PC-9 (cell line): ENCODE measurements at regions of chrX and their contacts with region 1.

Region 1: GRCh38 chrX:23704673-23705206 is 37.4 kb downstream of the PRDX4 start:
- DNase-seq: no peak
- H3K4me3 ChIP-seq: no peak overlapping the region
- H3K27ac ChIP-seq: no peak overlapping the region
- H3K4me1 ChIP-seq: no peaks in the 10 kb centered on the region
- H3K27me3 ChIP-seq: no peaks in the 10 kb centered on the region
- CTCF ChIP-seq: no peak

Region 2: DNA sequence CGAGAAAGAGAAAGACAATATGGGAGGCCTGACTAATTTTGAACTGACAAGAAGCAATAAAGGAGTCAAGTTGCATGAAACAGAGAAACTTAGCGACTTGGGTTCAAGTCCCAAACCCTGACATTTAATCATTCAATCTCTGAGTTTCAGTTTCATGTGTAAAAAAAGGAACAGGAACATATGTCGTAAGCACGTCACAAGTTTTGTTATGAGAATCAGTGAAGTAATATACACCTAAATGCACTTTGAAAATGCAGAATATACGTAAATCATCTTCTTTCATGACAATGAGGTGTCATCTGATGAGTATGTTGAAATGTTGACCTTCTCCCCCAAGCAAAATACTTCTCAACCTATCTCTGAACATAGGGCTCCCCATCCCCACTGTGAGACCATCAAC is 28.0 kb after region 1 on chrX:
- CTCF ChIA-PET with region 1: interaction called, 12 read pairs
- POLR2A ChIA-PET with region 1: no interaction called
- intact Hi-C with region 1: no loop called
- DNase-seq: no peak
- H3K4me3 ChIP-seq: no peak overlapping the region
- H3K27ac ChIP-seq: no peak overlapping the region
- H3K4me1 ChIP-seq: no peaks in the 10 kb centered on the region
- H3K27me3 ChIP-seq: no peaks in the 10 kb centered on the region
- CTCF ChIP-seq: no peak